ENCODE measurements at regions of chr1 and their contacts with region 1.

Region 1: DNA sequence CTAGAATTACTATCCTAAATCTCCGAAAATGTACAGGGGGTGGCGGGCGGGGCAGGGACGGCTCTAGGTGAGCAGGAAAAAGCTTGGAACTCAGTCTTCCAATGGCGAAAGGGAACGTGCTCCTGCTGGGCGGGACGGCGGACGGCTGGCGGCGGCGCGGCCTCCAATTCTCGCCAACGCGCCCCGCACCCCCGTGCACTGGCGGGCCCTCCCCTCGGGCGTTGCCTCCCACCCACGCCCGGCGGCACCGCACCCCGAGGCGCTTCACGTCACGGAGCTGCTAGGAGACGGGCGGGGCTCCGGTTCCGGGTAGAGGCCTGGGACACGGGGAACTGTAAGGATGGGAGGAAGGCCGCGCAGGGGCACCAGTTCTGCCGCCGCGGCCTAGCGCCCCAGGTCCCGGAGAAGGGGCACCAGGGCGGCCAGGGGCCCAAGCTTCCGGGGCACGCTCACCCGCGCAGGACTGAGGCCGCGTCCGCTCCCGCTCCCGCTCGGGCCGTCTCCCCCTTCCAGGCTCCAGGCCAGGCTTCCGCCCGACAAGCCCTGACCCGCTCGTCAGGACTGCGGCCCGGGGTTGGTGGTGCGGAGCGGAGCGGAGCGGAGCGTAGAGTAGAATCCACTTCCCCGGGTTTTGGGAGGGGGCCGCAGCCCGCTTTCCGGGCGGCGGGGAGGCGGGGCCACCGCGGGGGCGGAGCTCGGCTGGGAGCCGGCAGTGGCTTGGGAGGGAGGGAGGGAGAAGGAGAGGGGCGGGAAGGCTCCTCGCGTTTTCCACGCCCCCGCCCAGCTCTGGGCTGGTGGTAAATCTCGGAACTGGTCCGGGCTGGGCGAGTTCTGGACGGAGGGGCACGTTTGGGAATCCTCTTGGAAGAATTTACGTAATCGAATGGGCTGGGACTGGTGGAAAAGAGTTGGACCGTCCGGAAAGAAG is at the start of gene DDX59:
- DNase-seq: peak; percentile 98
- ATAC-seq: peak; percentile 97
- H3K4me3 ChIP-seq: peak within 1 kb of the TSS; percentile 57 to 71
- H3K27ac ChIP-seq: peak within 1 kb of the TSS; percentile 89 to 92
- H3K4me1 ChIP-seq: peaks cover 1 to 13% of the 10 kb centered on the region in 2 donors
- H3K27me3 ChIP-seq: no peaks in the 10 kb centered on the region
- total RNA-seq, gene DDX59: 22.9 to 28.7 TPM

Region 2: DNA sequence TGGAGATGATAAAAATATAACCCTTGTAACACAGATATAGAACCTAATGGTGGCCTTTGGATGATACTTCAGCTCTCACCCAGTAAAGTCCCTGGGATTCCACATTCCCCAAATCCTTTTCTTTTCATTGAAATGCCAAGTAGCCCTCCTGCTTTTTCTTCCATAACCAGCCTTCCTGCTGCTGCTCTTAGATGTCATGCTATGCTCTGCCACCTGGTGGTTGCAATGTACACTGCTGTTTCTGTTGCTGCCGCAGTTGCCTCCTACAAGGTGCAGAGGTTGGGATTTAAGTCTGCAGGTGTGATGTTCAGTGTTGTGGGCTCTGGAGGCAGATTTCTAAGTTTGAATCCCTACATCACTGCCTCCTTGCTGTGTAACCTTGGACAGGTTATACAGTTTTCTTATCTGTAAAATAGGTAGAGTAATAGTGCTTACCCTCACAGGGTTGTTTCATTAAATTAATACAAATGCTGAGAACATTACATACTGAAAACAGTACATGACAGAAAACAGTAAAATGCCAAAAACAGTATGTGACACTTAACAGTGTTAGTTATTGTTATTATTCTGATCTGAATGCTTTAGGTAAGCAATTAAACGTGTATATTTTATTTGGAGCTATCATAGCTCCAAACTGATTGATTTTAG is 133.4 kb after region 1 on chr1:
- intact Hi-C with region 1: loop called (anchors 5 kb)
- DNase-seq: peak; percentile 79 to 83
- ATAC-seq: peak; percentile 94
- H3K4me3 ChIP-seq: no peak overlapping the region
- H3K27ac ChIP-seq: no peak overlapping the region
- H3K4me1 ChIP-seq: no peaks in the 10 kb centered on the region
- H3K27me3 ChIP-seq: no peaks in the 10 kb centered on the region

Measured in aorta (tissue), 5 donors.